ENCODE measurements at regions of chr4 and their contacts with region 1.

Region 1: GRCh38 chr4:22389240-22389870 is 126.5 kb downstream of the ADGRA3 start:
- DNase-seq: peak; percentile 58
- H3K4me3 ChIP-seq: no peak overlapping the region
- CTCF ChIP-seq: peak; percentile 75

Region 2: GRCh38 chr4:21765810-21766407 is 623.4 kb before region 1 on chr4:
- CTCF ChIA-PET with region 1: interaction called, 12 read pairs
- POLR2A ChIA-PET with region 1: no interaction called
- DNase-seq: no peak
- H3K4me3 ChIP-seq: no peak overlapping the region
- CTCF ChIP-seq: peak; percentile 86

Region 3: DNA sequence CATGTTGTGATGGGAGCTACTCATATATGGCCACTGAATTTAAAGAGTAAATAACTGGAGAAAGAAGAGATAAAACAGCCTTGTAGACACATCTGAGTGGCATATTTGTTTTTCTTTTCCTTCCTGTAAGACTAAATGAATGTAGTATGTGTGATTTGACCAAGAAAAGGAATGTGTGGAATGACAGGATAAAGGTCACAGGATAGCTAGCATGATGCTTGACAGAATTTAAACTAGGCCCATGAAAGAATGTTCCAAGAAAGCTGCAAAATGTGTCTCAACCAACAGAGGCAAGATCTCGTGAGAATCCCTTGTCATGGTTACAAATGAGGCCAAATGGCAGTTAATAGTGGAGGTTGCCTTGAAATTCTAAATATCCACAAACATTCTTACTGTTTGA is 577.8 kb before region 1 on chr4:
- CTCF ChIA-PET with region 1: interaction called, 10 read pairs
- POLR2A ChIA-PET with region 1: no interaction called
- DNase-seq: no peak
- H3K4me3 ChIP-seq: no peak overlapping the region
- CTCF ChIP-seq: no peak

Region 4: DNA sequence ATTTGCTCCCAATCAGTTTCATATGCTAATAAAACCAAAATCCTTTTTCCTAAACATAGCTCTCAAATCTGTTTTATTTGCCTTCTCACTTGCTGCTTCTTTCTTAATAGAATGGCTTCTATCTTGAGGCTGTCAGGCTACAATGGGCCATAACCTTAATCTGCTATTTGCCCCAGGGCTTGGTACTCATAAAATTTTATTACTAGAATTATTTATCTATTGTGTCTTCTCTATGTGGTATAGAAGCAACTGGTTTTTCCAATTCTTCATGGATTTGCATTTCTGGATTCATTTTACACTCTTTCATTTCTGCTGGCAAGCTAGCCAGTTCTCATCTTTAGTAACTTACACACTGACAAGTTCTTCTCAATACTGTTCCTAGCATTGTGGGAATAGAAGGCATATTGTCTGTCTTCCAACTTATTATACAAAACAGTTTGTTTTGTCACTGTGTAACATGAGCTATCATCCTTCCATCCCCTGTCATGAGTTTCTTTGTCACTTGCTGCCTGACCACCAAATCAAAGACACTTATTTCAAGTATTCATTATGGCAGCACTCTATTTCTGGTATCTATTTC is 344.2 kb before region 1 on chr4:
- CTCF ChIA-PET with region 1: no interaction called
- POLR2A ChIA-PET with region 1: no interaction called
- DNase-seq: no peak
- H3K4me3 ChIP-seq: no peak overlapping the region
- CTCF ChIP-seq: no peak

Region 5: GRCh38 chr4:22129454-22130029 is 259.8 kb before region 1 on chr4:
- CTCF ChIA-PET with region 1: interaction called, 52 read pairs
- POLR2A ChIA-PET with region 1: no interaction called
- DNase-seq: no peak
- H3K4me3 ChIP-seq: no peak overlapping the region
- CTCF ChIP-seq: peak; percentile 64

Region 6: GRCh38 chr4:22356987-22357596 is 32.3 kb before region 1 on chr4:
- CTCF ChIA-PET with region 1: interaction called, 60 read pairs
- POLR2A ChIA-PET with region 1: no interaction called
- DNase-seq: no peak
- H3K4me3 ChIP-seq: no peak overlapping the region
- CTCF ChIP-seq: peak; percentile 36

Region 7: DNA sequence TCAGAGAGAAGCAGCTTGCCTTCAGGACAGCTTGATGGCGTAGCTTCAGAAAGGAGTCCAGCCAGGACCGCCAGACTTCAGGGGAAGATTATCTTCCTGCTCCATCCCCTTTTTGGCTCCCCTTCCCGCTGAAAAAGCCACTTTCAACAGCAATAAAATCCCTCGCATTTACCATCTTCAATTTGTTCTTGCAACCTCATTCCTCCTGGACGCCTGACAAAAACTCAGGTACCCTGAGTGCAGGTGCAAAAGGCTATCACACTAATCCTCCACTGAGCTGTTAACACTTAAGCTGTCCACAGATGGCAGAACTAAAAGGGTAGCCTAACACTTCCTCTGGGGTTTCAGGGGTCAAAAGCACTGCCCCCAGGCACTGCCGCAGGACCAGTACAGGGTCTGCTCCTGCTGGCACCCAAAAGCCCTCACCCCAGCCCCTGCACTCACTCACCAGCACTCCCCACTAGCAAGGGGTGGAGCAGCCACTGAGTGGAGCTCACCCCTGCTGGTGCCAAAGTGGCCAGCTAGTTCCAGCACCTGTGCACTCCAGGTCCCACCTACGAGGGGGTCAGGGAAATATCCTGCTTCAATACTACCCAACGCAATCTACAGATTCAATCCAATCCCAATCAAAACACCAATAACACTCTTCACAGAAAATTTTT is 19.3 kb before region 1 on chr4:
- CTCF ChIA-PET with region 1: interaction called, 12 read pairs
- POLR2A ChIA-PET with region 1: no interaction called
- DNase-seq: no peak
- H3K4me3 ChIP-seq: no peak overlapping the region
- CTCF ChIP-seq: no peak

Region 8: GRCh38 chr4:22410645-22411247 is 21.4 kb after region 1 on chr4:
- CTCF ChIA-PET with region 1: interaction called, 45 read pairs
- POLR2A ChIA-PET with region 1: no interaction called
- DNase-seq: no peak
- H3K4me3 ChIP-seq: no peak overlapping the region
- CTCF ChIP-seq: peak; percentile 19

Region 9: GRCh38 chr4:22463179-22463578 is 73.8 kb after region 1 on chr4:
- CTCF ChIA-PET with region 1: no interaction called
- POLR2A ChIA-PET with region 1: no interaction called
- DNase-seq: no peak
- H3K4me3 ChIP-seq: no peak overlapping the region
- CTCF ChIP-seq: no peak

Measured in AG04449 (cell line).